ENCODE measurements at regions of chr2 and their contacts with region 1.

Region 1: DNA sequence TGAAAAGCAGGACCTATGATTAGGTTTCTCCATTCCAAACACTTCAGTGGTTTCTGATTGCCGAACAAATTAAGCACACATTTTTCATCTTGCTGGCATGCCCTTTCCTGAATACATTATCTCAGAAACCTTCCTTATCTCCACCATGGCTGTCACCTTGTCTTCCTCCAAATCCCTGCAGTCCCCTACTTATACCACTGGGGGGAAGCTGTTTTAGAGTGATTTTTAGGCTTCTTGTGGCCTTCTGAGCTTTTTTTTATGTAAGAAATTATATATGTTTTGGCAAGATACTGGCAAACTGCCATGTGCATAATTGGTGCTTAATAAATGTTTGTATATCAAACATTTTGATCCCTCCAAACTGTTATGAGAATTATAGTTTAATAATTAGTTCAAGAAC is 229.2 kb downstream of the MYT1L start:
- DNase-seq: no peak
- H3K4me3 ChIP-seq: no peak overlapping the region
- H3K27ac ChIP-seq: no peak overlapping the region
- H3K4me1 ChIP-seq: no peaks in the 10 kb centered on the region
- H3K27me3 ChIP-seq: no peaks in the 10 kb centered on the region
- CTCF ChIP-seq: peak in 2 of 3 experiments; percentile 36 to 50; a peak in 2 of 4 replicates
- EP300 ChIP-seq: no peak
- POLR2A ChIP-seq: no peak
- RAD21 ChIP-seq: peak; percentile 27 to 45

Region 2: DNA sequence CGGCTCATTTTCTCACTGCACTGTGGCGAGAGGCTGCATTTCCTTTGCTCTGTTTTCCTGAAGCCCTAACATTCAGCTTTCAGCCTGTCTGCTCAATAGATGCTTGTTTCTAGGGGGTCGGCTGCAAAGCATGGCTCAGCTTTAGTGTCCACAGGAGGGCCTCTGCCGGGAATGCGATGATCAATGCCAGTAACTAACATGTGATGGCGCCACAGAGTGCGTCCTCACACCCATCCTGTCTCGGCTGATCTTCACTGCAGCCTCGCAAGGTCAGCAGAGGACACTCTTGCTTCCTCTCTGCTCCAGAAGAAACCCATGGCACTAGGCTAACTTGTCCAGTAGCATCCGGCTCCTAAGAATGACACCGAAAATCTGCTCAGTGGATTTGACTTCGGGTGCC is 201.2 kb before region 1 on chr2:
- CTCF ChIA-PET with region 1: interaction called, 14 read pairs
- POLR2A ChIA-PET with region 1: no interaction called
- DNase-seq: peak; percentile 59 to 72
- H3K4me3 ChIP-seq: no peak overlapping the region
- H3K27ac ChIP-seq: no peak overlapping the region
- H3K4me1 ChIP-seq: no peaks in the 10 kb centered on the region
- H3K27me3 ChIP-seq: no peaks in the 10 kb centered on the region
- CTCF ChIP-seq: peak; percentile 96 to 99 (median 97)
- EP300 ChIP-seq: no peak
- POLR2A ChIP-seq: no peak
- RAD21 ChIP-seq: peak; percentile 80 to 83

Region 3: GRCh38 chr2:2112416-2113105 is 10.6 kb after region 1 on chr2:
- CTCF ChIA-PET with region 1: interaction called, 17 read pairs
- POLR2A ChIA-PET with region 1: no interaction called
- DNase-seq: no peak
- H3K4me3 ChIP-seq: no peak overlapping the region
- H3K27ac ChIP-seq: no peak overlapping the region
- H3K4me1 ChIP-seq: no peaks in the 10 kb centered on the region
- H3K27me3 ChIP-seq: no peaks in the 10 kb centered on the region; a peak in 1 of 7 replicates
- CTCF ChIP-seq: no peak
- EP300 ChIP-seq: no peak
- POLR2A ChIP-seq: no peak
- RAD21 ChIP-seq: no peak

Measured in H1 (cell line).